ENCODE measurements at regions of chr2 and their contacts with region 1.

Region 1: DNA sequence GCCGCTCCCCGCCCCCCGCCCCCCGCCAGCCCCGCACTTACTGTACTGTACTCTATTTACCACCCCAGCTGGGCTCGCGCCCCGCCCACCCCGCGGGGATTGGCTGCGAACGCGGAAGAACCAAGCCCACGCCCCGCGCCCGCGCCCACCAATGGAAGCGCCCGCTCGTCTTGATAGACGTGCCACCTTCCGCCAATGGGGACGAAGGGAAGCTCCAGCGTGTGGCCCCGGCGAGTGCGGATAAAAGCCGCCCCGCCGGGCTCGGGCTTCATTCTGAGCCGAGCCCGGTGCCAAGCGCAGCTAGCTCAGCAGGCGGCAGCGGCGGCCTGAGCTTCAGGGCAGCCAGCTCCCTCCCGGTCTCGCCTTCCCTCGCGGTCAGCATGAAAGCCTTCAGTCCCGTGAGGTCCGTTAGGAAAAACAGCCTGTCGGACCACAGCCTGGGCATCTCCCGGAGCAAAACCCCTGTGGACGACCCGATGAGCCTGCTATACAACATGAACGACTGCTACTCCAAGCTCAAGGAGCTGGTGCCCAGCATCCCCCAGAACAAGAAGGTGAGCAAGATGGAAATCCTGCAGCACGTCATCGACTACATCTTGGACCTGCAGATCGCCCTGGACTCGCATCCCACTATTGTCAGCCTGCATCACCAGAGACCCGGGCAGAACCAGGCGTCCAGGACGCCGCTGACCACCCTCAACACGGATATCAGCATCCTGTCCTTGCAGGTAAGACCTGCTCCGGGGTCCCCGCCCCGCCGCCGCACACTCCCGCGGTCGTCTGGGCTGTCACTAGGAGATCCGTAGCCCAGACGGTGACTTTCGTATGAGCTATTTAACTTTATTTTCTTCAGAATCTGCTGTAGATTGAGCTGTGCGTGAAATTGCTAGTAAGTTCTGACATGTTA is at the start of gene ID2:
- DNase-seq: peak; percentile 81
- ATAC-seq: peak; percentile 87
- H3K4me3 Mint-ChIP-seq: peak within 1 kb of the TSS; percentile 85
- H3K27ac Mint-ChIP-seq: no peak within 1 kb of the TSS
- H3K4me1 Mint-ChIP-seq: peaks cover 54% of the 10 kb centered on the region
- H3K27me3 Mint-ChIP-seq: peaks cover 57% of the 10 kb centered on the region
- CTCF ChIP-seq: no peak
- total RNA-seq, gene ID2: 6.4 and 8.1 TPM in 2 replicates

Region 2: GRCh38 chr2:7118606-7119503 is 1563.2 kb before region 1 on chr2:
- CTCF ChIA-PET with region 1: no interaction called
- POLR2A ChIA-PET with region 1: no interaction called
- intact Hi-C with region 1: loop called (anchors 1 kb)
- DNase-seq: no peak
- ATAC-seq: no peak
- H3K4me3 Mint-ChIP-seq: no peak overlapping the region
- H3K27ac Mint-ChIP-seq: no peak overlapping the region
- H3K4me1 Mint-ChIP-seq: no peaks in the 10 kb centered on the region
- H3K27me3 Mint-ChIP-seq: peaks cover 2% of the 10 kb centered on the region
- CTCF ChIP-seq: no peak

Region 3: DNA sequence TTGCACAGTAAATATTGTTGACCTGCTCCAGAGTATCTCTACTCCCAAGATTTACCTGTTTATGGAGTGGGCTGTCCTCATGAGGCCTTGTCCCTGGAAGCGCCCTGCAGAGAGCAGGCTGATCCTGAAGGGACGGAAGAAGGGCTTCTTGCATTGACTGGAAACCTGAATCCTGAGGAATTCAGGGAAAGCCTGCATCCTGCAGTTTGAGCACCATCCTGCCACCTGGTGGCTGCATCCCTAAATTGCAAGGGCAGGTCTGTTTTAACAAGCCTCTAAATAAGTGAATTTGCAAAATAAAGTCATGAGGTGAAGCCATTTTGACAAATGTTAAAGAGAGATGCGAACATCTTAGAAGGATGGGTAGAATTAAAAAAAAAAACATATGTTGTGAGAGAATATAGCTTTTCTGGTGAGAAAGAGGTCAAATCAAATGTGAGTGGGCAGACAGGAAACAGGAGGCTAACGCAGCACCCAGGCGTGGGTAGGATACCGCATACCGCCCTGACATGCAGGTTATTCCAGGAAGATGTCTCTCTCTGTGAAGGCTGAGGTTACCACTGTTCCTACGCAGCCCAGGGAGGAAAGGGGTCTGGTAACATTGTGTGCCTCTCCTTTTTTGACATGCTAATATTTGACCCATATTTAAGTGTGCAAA is 1009.9 kb before region 1 on chr2:
- CTCF ChIA-PET with region 1: no interaction called
- POLR2A ChIA-PET with region 1: no interaction called
- intact Hi-C with region 1: loop called (anchors 5 kb)
- DNase-seq: no peak
- ATAC-seq: no peak
- H3K4me3 Mint-ChIP-seq: no peak overlapping the region
- H3K27ac Mint-ChIP-seq: no peak overlapping the region
- H3K4me1 Mint-ChIP-seq: no peaks in the 10 kb centered on the region
- H3K27me3 Mint-ChIP-seq: peaks cover 3% of the 10 kb centered on the region
- CTCF ChIP-seq: no peak

Region 4: GRCh38 chr2:7773362-7774360 is 908.4 kb before region 1 on chr2:
- CTCF ChIA-PET with region 1: no interaction called
- POLR2A ChIA-PET with region 1: no interaction called
- intact Hi-C with region 1: no loop called
- DNase-seq: no peak
- ATAC-seq: no peak
- H3K4me3 Mint-ChIP-seq: no peak overlapping the region
- H3K27ac Mint-ChIP-seq: no peak overlapping the region
- H3K4me1 Mint-ChIP-seq: peaks cover 2% of the 10 kb centered on the region
- H3K27me3 Mint-ChIP-seq: peaks cover 3% of the 10 kb centered on the region
- CTCF ChIP-seq: no peak

Region 5: DNA sequence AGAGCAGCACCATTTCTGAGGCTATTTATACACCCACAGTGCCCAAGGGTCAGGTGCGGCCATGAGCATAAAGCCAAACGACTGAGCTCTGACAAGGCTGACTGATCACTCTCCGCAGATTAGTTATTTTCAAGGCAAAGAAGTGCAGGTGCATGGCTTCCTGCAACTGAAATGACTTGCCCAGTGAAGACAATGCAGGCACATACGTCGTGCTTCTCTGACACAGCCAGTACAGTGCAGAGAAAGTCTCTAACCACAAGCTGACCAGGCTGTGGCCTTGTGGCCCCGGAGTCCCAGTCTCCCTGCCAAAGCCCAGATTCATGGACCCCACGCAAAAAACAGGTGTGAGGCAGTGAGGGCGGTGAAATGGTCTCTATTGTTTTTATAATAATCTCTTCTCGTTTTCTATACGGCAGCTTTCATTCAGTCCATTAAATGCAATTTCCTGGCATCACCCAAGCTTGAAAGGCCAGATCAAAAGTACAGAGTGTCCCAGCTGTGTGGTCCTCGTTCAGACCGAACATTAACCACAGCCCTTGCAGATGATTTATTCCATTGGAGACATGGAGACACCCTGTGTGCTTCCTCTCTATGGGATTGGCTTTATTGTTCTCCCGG is 447.2 kb before region 1 on chr2:
- CTCF ChIA-PET with region 1: no interaction called
- POLR2A ChIA-PET with region 1: no interaction called
- intact Hi-C with region 1: loop called (anchors 10 kb)
- DNase-seq: no peak
- ATAC-seq: peak; percentile 60
- H3K4me3 Mint-ChIP-seq: no peak overlapping the region
- H3K27ac Mint-ChIP-seq: no peak overlapping the region
- H3K4me1 Mint-ChIP-seq: peaks cover 16% of the 10 kb centered on the region
- H3K27me3 Mint-ChIP-seq: peaks cover 47% of the 10 kb centered on the region
- CTCF ChIP-seq: no peak

Region 6: GRCh38 chr2:8525582-8526402 is 156.2 kb before region 1 on chr2:
- CTCF ChIA-PET with region 1: interaction called, 7 read pairs
- POLR2A ChIA-PET with region 1: interaction called, 5 read pairs
- intact Hi-C with region 1: loop called (anchors 5 kb)
- DNase-seq: no peak
- ATAC-seq: peak; percentile 46
- H3K4me3 Mint-ChIP-seq: peak overlapping the region; percentile 54
- H3K27ac Mint-ChIP-seq: peak overlapping the region; percentile 36
- H3K4me1 Mint-ChIP-seq: peaks cover 43% of the 10 kb centered on the region
- H3K27me3 Mint-ChIP-seq: peaks cover 30% of the 10 kb centered on the region
- CTCF ChIP-seq: no peak

Region 7: DNA sequence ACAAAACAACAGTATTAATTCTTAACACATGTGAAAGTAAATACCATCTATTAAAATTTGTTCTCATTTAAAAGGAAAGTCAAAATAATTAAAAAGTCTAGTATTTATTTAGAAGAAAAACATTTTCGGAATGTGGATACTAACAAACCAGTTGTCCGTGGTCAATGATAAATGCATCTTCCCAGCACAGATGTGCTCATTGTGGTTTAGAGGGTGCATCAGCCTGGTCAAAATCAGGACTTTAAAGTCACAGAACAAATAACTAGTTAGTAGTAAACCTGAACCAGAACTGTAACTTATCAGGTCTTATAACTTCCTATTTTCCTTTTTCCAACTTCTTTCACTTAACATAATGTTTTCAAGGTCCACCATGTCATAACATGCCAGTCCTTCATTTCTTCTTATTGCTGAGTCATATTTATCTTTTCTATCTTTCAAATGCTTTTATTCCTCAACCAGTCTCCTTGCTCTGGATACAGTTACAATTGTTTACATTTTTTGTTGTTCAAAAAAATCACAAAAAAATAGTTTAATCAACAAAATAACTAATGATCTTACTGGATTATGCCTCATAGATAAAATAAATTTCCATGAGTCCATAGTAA is 55.6 kb after region 1 on chr2:
- CTCF ChIA-PET with region 1: no interaction called
- POLR2A ChIA-PET with region 1: no interaction called
- intact Hi-C with region 1: no loop called
- DNase-seq: no peak
- ATAC-seq: no peak
- H3K4me3 Mint-ChIP-seq: no peak overlapping the region
- H3K27ac Mint-ChIP-seq: no peak overlapping the region
- H3K4me1 Mint-ChIP-seq: no peaks in the 10 kb centered on the region
- H3K27me3 Mint-ChIP-seq: no peaks in the 10 kb centered on the region
- CTCF ChIP-seq: no peak

Region 8: DNA sequence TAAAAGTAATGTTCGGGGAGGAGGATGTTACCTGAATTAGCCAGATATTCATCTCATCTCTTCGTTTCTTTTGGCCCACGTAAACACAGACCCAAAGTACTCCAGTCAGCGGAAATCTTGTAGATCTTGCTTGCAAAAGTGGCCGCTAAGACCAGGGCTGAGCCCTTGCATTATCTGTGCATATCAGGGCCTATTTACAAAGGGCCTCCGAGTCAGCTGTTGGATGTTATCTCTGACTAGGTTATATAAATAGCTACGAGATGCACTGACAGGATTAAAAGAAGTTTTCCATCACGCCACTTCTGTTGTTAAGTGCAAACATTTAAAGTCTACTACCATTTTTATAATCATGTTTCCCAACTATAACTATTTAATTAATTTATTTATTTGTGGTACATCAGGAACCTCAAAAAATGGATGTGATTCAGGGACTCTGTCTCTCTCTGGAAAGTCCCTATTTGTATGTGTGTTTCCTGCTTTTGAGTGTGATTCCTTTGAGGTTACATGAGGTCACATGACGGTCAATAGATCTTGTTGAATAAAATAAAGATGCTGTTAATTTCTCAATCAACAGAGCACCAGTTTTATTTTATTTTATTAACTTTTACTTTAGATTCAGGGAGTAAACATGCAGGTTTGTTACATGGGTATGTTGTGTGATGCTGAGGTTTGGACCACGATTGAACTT is 368.2 kb after region 1 on chr2:
- CTCF ChIA-PET with region 1: no interaction called
- POLR2A ChIA-PET with region 1: no interaction called
- intact Hi-C with region 1: no loop called
- DNase-seq: no peak
- ATAC-seq: no peak
- H3K4me3 Mint-ChIP-seq: no peak overlapping the region
- H3K27ac Mint-ChIP-seq: no peak overlapping the region
- H3K4me1 Mint-ChIP-seq: no peaks in the 10 kb centered on the region
- H3K27me3 Mint-ChIP-seq: no peaks in the 10 kb centered on the region
- CTCF ChIP-seq: no peak